ENCODE measurements at regions of chr15 and their contacts with region 1.

Region 1: GRCh38 chr15:77118882-77119321 is 48.0 kb upstream of the TSPAN3 start:
- ATAC-seq: peak; percentile 74 to 92 (median 81)
- H3K4me3 ChIP-seq: no peak overlapping the region
- H3K27ac ChIP-seq: no peak overlapping the region
- H3K4me1 ChIP-seq: peaks cover 3 to 6% of the 10 kb centered on the region in 2 donors

Region 2: GRCh38 chr15:77496710-77497103 is 377.8 kb after region 1 on chr15:
- in situ Hi-C with region 1: loop called in 1 of 9 experiments (anchors 25 kb)
- ATAC-seq: peak; percentile 56 to 94 (median 73)
- H3K4me3 ChIP-seq: no peak overlapping the region
- H3K27ac ChIP-seq: peak overlapping the region; percentile 4 to 52
- H3K4me1 ChIP-seq: peaks cover 35% of the 10 kb centered on the region in 2 donors

Region 3: GRCh38 chr15:77543159-77543882 is 424.4 kb after region 1 on chr15:
- in situ Hi-C with region 1: loop called in 5 of 9 experiments (anchors 25 kb)
- ATAC-seq: peak; percentile 51 to 88 (median 76)
- H3K4me3 ChIP-seq: peak overlapping the region in 2 of 5 donors; percentile 24 to 27
- H3K27ac ChIP-seq: no peak overlapping the region
- H3K4me1 ChIP-seq: peaks cover 45 to 52% of the 10 kb centered on the region in 2 donors

Region 4: DNA sequence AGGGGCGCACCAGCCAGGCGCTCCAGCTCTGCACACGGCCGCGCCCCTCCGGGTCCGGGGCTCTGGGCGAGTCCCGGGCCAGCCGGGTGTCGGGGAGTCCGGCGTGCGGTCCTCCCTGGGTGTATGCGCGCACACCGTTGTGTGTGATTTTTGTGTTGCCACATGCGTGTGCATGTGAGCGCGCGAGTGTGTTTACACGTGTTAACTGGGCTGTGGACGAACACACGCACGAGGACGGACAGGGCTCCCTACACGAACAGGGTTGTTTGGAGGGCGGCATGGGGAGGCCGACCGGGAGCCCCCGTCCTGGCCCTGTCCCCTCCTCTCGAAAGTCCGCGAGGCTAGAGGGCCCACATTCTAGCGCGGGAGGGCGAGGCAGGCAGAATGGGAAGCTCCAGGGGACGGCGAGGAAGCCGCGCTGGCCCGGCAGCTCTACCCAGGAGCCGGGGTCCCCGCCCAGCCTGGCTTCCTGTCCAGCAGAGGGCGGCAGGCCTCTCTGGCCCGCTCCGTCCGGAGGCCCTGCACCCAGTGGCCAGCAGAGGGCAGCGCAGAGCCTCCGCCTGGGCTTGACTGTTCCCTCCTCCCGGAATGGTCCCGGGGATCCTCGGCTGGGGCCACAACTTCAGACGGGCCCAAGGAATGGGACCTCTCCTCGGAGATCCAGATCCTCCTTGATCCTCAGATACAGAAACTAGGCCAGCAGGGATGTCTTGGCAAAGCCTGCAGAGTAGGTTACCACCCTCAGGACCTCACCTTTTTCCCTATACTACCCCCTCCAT is 514.4 kb after region 1 on chr15:
- in situ Hi-C with region 1: loop called in 3 of 9 experiments (anchors 25 kb)
- ATAC-seq: peak; percentile 71 to 91 (median 79)
- H3K4me3 ChIP-seq: peak overlapping the region; percentile 57 to 97 (median 86)
- H3K27ac ChIP-seq: peak overlapping the region; percentile 92 to 95
- H3K4me1 ChIP-seq: peaks cover 20 to 40% of the 10 kb centered on the region in 2 donors

Region 5: DNA sequence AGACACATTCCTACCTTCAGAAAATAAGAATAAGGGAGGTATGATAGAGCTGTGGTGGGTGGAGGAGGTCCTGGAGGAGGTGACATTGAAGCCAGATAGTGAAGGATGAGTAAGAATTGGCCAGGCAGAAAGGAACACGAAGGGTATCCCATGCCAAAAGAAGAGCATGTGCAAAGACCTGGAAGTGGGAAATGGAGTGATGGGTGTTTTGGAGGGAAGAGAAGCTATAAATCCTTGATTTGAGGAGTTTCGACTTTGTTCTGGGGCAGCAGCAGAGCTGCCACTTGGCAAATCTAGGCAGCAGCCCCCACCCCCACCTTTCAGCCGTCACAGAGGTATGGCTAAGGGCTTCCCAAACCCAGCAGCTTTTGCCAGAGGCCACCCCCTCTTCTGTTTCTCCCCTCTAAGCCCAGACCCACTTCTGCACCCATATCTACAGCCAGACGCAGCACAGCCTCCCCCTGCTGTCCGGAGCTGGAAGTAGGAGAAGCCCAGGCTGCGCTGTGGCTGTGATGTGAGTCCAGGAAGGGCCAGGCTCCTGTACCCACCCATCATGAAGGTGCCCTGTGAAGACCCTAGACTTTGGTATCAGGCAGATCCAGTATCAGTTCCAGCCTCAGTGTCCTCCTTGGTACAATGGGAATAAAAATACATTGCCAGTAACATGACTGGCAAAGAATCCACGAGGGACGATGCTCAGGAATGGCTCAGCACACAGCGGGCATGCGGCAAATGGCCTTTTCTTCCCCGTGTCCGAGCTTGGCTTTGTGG is 702.5 kb after region 1 on chr15:
- in situ Hi-C with region 1: loop called in 1 of 9 experiments (anchors 25 kb)
- ATAC-seq: peak; percentile 53 to 80 (median 60)
- H3K4me3 ChIP-seq: no peak overlapping the region
- H3K27ac ChIP-seq: peak overlapping the region in 1 of 2 donors; percentile 32
- H3K4me1 ChIP-seq: peaks cover 40 to 43% of the 10 kb centered on the region in 2 donors

Region 6: DNA sequence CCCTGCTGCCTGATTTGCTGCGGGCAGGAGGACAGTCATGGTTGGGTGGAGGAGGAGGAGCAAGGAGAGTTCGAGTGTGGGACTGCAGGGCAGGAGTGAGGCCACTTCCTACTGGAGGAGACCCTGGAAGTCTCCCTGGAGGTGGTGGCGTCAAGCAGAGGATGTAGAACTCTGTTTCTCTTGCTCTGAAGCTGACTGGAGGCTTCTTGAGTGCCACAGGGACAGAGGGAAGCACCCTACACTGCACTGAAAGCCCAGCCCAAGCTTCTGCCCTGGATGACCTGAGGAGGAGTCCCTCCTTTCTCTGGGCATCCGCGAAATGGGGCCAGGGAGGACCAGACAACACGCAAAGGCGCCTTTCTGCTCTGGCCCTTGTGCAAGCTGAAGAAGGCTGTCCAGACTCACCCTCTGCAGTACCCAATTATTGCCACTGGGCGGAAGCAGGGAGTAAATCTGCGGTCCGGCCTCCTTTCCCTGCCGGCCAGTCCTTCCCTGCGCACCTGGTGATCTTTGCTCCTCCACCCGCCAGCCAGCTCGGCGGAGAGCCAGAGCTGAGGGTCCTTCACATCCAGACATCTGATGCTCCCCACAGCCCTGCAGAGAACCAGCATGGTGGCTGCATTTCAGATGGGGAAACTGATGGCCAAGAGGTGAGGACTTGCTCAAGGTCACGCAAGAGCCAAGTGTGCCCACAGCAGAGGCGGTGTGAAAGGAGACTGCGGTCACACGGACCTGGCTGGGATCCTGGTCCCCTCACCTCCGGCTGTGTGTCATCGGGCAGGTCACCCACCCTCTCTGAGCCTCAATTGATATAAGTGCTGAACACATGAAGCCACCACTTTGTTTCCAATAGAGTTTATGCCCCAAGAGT is 751.5 kb after region 1 on chr15:
- in situ Hi-C with region 1: loop called in 2 of 9 experiments (anchors 25 kb)
- ATAC-seq: peak in 7 of 8 experiments; percentile 15 to 87 (median 17)
- H3K4me3 ChIP-seq: no peak overlapping the region
- H3K27ac ChIP-seq: no peak overlapping the region
- H3K4me1 ChIP-seq: peaks cover 32 to 38% of the 10 kb centered on the region in 2 donors

Measured in motor neuron (in vitro differentiated cells).